PC-3 (cell line): ENCODE measurements at regions of chr1 and their contacts with region 1.

Region 1: GRCh38 chr1:174159252-174160108 is at the start of gene RABGAP1L:
- DNase-seq: peak; percentile 90
- ATAC-seq: peak; percentile 81
- H3K4me3 ChIP-seq: peak within 1 kb of the TSS; percentile 96
- H3K27ac ChIP-seq: peak within 1 kb of the TSS; percentile 56
- H3K4me1 ChIP-seq: peaks cover 14% of the 10 kb centered on the region
- H3K27me3 ChIP-seq: no peaks in the 10 kb centered on the region
- CTCF ChIP-seq: no peak
- total RNA-seq, gene RABGAP1L: 11.8 and 24.4 TPM in 2 replicates

Region 2: GRCh38 chr1:174013864-174014418 is 145.5 kb before region 1 on chr1:
- CTCF ChIA-PET with region 1: no interaction called
- POLR2A ChIA-PET with region 1: no interaction called
- intact Hi-C with region 1: loop called (anchors 10 kb)
- DNase-seq: no peak
- ATAC-seq: no peak
- H3K4me3 ChIP-seq: no peak overlapping the region
- H3K27ac ChIP-seq: no peak overlapping the region
- H3K4me1 ChIP-seq: no peaks in the 10 kb centered on the region
- H3K27me3 ChIP-seq: no peaks in the 10 kb centered on the region
- CTCF ChIP-seq: no peak

Region 3: GRCh38 chr1:174217787-174218574 is 58.5 kb after region 1 on chr1:
- CTCF ChIA-PET with region 1: no interaction called
- POLR2A ChIA-PET with region 1: no interaction called
- intact Hi-C with region 1: loop called (anchors 5 kb)
- DNase-seq: peak; percentile 52
- ATAC-seq: peak; percentile 46
- H3K4me3 ChIP-seq: no peak overlapping the region
- H3K27ac ChIP-seq: no peak overlapping the region
- H3K4me1 ChIP-seq: no peaks in the 10 kb centered on the region; the same call in 1 of the 2 replicates
- H3K27me3 ChIP-seq: no peaks in the 10 kb centered on the region
- CTCF ChIP-seq: peak; percentile 75